SK-N-SH (cell line): ENCODE measurements at regions of chr22 and their contacts with region 1.

Region 1: GRCh38 chr22:29040385-29041275 is 21.0 kb downstream of the C22orf31 start:
- DNase-seq: peak; percentile 73
- H3K4me3 ChIP-seq: no peak overlapping the region; a peak in 1 of 4 replicates
- H3K27ac ChIP-seq: peak overlapping the region in 1 of 2 experiments; percentile 80; a peak in 2 of 4 replicates
- H3K4me1 ChIP-seq: peaks cover 2 to 28% of the 10 kb centered on the region in 2 experiments; a peak in 3 of 4 replicates
- H3K27me3 ChIP-seq: no peaks in the 10 kb centered on the region
- CTCF ChIP-seq: peak; percentile 98
- EP300 ChIP-seq: no peak
- RAD21 ChIP-seq: peak; percentile 97

Region 2: GRCh38 chr22:28829358-28830181 is 211.1 kb before region 1 on chr22:
- CTCF ChIA-PET with region 1: interaction called, 28 read pairs
- POLR2A ChIA-PET with region 1: no interaction called
- DNase-seq: peak; percentile 77
- H3K4me3 ChIP-seq: peak overlapping the region in 1 of 2 experiments; percentile 31; a peak in 1 of 4 replicates
- H3K27ac ChIP-seq: no peak overlapping the region
- H3K4me1 ChIP-seq: no peaks in the 10 kb centered on the region
- H3K27me3 ChIP-seq: no peaks in the 10 kb centered on the region
- CTCF ChIP-seq: peak; percentile 98
- EP300 ChIP-seq: no peak
- RAD21 ChIP-seq: peak; percentile 98

Region 3: GRCh38 chr22:28855355-28856094 is 185.1 kb before region 1 on chr22:
- CTCF ChIA-PET with region 1: interaction called, 100 read pairs
- POLR2A ChIA-PET with region 1: no interaction called
- DNase-seq: peak; percentile 71
- H3K4me3 ChIP-seq: no peak overlapping the region; a peak in 1 of 4 replicates
- H3K27ac ChIP-seq: no peak overlapping the region
- H3K4me1 ChIP-seq: no peaks in the 10 kb centered on the region
- H3K27me3 ChIP-seq: no peaks in the 10 kb centered on the region
- CTCF ChIP-seq: peak; percentile 91
- EP300 ChIP-seq: no peak
- RAD21 ChIP-seq: peak; percentile 95

Region 4: DNA sequence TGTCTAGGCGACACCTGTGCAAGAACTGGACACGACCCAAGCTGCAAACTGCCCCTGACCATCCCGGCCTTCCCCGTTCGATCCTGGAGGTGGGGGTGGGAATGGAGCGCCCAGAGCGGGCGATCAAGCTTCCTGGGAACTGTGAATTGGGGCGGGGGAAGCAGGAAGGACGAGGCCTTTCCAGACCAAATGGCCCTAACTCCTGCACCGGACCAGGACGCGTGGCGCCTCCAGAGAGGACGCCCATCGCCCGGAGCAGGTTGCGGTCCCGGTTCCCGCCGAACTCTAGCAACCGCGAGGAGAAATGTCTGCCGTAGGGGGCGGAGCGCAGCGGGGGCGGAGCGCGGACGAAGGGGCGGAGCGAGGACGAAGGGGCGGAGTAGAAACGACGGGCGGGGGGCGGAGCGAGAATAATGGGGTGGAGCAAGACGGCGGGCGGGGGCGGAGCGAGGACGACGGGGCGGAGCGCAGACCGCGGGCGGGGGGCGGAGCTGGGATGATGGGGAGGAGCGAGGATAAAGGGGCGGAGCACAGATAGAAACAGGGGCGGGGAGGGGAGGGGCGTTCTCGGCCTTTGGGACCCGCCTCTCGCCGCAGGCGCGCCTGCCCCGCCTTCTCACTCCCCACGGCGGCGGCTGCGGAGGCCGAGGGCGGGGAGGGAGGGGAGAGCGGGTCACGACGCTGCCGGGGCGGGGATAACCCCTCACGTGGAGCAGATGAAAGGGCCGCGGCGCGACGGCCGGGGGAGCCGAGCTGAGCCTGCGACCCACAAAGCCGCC is 157.6 kb before region 1 on chr22 and contains the start of gene ZNRF3:
- CTCF ChIA-PET with region 1: interaction called, 15 read pairs
- POLR2A ChIA-PET with region 1: interaction called, 3 read pairs
- DNase-seq: peak; percentile 97
- H3K4me3 ChIP-seq: peak within 1 kb of the TSS; percentile 63 to 86
- H3K27ac ChIP-seq: peak within 1 kb of the TSS; percentile 40 to 60; a peak in 3 of 4 replicates
- H3K4me1 ChIP-seq: peaks cover 14 to 17% of the 10 kb centered on the region in 2 experiments; a peak in 3 of 4 replicates
- H3K27me3 ChIP-seq: no peaks in the 10 kb centered on the region
- CTCF ChIP-seq: no peak
- EP300 ChIP-seq: no peak
- RAD21 ChIP-seq: no peak
- polyA plus RNA-seq, gene ZNRF3: 2.9 and 4.2 TPM in 2 replicates

Region 5: GRCh38 chr22:28943501-28943879 is 97.1 kb before region 1 on chr22:
- CTCF ChIA-PET with region 1: interaction called, 12 read pairs
- POLR2A ChIA-PET with region 1: no interaction called
- DNase-seq: no peak
- H3K4me3 ChIP-seq: no peak overlapping the region
- H3K27ac ChIP-seq: no peak overlapping the region
- H3K4me1 ChIP-seq: peaks cover 4 to 5% of the 10 kb centered on the region in 2 experiments; a peak in 1 of 4 replicates
- H3K27me3 ChIP-seq: no peaks in the 10 kb centered on the region
- CTCF ChIP-seq: no peak
- EP300 ChIP-seq: no peak
- RAD21 ChIP-seq: no peak

Region 6: GRCh38 chr22:29081517-29082236 is 41.0 kb after region 1 on chr22:
- CTCF ChIA-PET with region 1: no interaction called
- POLR2A ChIA-PET with region 1: no interaction called
- DNase-seq: no peak
- H3K4me3 ChIP-seq: no peak overlapping the region
- H3K27ac ChIP-seq: peak overlapping the region in 1 of 2 experiments; percentile 18; a peak in 1 of 4 replicates
- H3K4me1 ChIP-seq: peaks cover 7 to 30% of the 10 kb centered on the region in 2 experiments; a peak in 3 of 4 replicates
- H3K27me3 ChIP-seq: no peaks in the 10 kb centered on the region
- CTCF ChIP-seq: no peak
- EP300 ChIP-seq: no peak
- RAD21 ChIP-seq: no peak

Region 7: GRCh38 chr22:29154364-29155048 is 113.9 kb after region 1 on chr22:
- CTCF ChIA-PET with region 1: interaction called, 10 read pairs
- POLR2A ChIA-PET with region 1: no interaction called
- DNase-seq: peak; percentile 91
- H3K4me3 ChIP-seq: peak overlapping the region; percentile 6 to 31; a peak in 3 of 4 replicates
- H3K27ac ChIP-seq: no peak overlapping the region
- H3K4me1 ChIP-seq: peaks cover 0 to 4% of the 10 kb centered on the region in 2 experiments; a peak in 2 of 4 replicates
- H3K27me3 ChIP-seq: no peaks in the 10 kb centered on the region
- CTCF ChIP-seq: peak; percentile 91
- EP300 ChIP-seq: no peak
- RAD21 ChIP-seq: peak; percentile 80

Region 8: DNA sequence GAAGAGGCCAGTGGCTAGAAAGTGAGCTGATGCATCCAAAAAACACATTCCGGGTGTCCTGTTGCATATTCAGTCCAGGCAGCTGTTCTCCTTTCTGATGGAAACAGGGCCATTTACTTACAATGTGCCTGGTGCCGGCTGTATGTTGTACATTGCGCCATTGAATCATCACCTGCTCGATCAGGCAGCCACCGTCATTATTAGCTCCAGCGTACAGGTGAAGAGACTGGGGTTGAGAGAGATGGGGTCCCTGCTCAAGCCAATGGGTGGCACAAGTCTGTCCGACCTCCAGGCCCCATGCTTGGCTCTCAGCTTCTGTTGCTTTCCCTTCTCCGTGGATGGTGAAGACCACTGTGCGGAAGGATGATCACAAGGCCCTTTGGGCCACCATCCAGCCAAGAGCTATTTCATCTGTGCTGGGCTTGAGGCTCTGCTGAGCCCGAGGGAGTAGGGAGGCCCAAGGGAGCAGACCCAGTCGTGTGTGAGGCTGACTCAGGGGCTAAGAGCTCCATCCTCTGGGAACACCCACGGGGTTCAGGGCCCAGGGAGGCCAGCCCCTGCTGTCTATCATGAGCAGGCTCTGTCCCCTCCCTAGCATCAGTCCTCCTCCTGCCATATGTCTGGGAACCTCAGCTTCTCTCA is 144.3 kb after region 1 on chr22:
- CTCF ChIA-PET with region 1: no interaction called
- POLR2A ChIA-PET with region 1: no interaction called
- DNase-seq: no peak
- H3K4me3 ChIP-seq: no peak overlapping the region
- H3K27ac ChIP-seq: no peak overlapping the region
- H3K4me1 ChIP-seq: no peaks in the 10 kb centered on the region; a peak in 1 of 4 replicates
- H3K27me3 ChIP-seq: no peaks in the 10 kb centered on the region
- CTCF ChIP-seq: no peak
- EP300 ChIP-seq: no peak
- RAD21 ChIP-seq: no peak